GM10248 (cell line): ENCODE measurements at regions of chr18 and their contacts with region 1.

Region 1: DNA sequence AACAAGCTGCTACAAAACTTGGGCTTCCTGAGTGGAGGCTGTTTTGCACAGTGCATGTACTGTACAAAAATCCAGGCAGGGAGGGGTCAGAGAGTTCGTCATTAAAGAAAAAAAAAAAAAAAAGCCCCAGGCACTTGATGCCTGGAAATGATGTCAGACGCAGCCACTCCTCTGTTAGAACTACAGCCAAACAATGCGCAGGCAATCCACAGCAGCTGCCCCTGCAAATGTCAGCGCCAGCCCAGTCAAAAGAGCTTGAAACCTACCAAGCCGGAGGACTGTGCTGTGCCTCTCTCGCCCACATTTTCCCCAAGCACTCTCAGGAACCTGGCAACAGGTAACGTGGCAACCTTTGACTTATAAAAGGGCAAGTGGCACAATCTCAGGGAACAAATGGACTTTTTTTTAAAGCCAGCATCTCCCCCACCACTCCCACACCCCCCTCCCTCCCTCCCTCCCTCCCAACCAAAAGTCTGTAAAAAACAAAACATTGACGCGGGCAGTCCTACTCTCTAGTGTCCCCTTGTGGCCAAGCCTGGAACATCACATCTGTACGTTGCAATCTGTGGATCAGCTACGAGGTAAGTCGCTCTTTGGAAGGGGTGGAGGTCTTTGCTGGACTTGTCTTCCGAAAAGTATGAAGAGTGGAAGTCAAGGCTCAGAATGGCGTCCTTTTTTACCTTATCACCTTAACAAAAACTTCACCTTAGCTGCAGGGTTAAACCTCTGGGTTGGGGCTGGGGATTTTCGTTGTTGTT is 144.1 kb downstream of the TGIF1 start:
- DNase-seq: peak; percentile 75
- CTCF ChIP-seq: peak; percentile 95

Region 2: GRCh38 chr18:3281456-3282400 is 312.4 kb before region 1 on chr18:
- CTCF ChIA-PET with region 1: interaction called, 11 read pairs
- POLR2A ChIA-PET with region 1: no interaction called
- DNase-seq: peak; percentile 59
- CTCF ChIP-seq: peak; percentile 61

Region 3: DNA sequence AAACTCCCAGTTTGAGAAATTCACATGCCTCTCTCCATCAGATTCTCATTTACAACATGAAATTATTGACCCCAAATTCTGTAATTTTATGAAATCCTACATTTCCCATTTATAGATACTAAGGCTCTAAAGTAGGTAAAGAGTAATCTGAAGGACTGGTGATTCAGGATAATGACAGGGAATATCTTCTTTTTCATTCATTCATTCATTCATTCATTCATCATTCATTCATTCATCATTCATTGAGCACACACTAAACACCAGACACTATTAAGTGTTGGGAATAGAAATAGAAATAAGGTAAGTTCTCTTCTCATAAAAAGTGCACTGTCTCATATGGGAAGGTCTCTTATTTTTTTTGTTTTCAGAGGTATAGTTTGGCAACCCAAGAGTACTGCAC is 27.2 kb before region 1 on chr18:
- CTCF ChIA-PET with region 1: no interaction called
- POLR2A ChIA-PET with region 1: no interaction called
- DNase-seq: no peak
- CTCF ChIP-seq: no peak

Region 4: GRCh38 chr18:3604498-3605408 is 10.7 kb after region 1 on chr18:
- CTCF ChIA-PET with region 1: interaction called, 32 read pairs
- POLR2A ChIA-PET with region 1: no interaction called
- DNase-seq: peak; percentile 47
- CTCF ChIP-seq: no peak

Region 5: GRCh38 chr18:3611313-3612090 is 17.4 kb after region 1 on chr18:
- CTCF ChIA-PET with region 1: interaction called, 29 read pairs
- POLR2A ChIA-PET with region 1: no interaction called
- DNase-seq: no peak
- CTCF ChIP-seq: no peak